ENCODE measurements at regions of chrX and their contacts with region 1.

Region 1: GRCh38 chrX:55135171-55135570 is 46.4 kb downstream of the PAGE2 start:
- DNase-seq: peak; percentile 43
- H3K4me3 ChIP-seq: no peak overlapping the region
- H3K27ac ChIP-seq: no peak overlapping the region
- H3K4me1 ChIP-seq: no peaks in the 10 kb centered on the region
- H3K27me3 ChIP-seq: no peaks in the 10 kb centered on the region
- CTCF ChIP-seq: peak; percentile 61

Region 2: DNA sequence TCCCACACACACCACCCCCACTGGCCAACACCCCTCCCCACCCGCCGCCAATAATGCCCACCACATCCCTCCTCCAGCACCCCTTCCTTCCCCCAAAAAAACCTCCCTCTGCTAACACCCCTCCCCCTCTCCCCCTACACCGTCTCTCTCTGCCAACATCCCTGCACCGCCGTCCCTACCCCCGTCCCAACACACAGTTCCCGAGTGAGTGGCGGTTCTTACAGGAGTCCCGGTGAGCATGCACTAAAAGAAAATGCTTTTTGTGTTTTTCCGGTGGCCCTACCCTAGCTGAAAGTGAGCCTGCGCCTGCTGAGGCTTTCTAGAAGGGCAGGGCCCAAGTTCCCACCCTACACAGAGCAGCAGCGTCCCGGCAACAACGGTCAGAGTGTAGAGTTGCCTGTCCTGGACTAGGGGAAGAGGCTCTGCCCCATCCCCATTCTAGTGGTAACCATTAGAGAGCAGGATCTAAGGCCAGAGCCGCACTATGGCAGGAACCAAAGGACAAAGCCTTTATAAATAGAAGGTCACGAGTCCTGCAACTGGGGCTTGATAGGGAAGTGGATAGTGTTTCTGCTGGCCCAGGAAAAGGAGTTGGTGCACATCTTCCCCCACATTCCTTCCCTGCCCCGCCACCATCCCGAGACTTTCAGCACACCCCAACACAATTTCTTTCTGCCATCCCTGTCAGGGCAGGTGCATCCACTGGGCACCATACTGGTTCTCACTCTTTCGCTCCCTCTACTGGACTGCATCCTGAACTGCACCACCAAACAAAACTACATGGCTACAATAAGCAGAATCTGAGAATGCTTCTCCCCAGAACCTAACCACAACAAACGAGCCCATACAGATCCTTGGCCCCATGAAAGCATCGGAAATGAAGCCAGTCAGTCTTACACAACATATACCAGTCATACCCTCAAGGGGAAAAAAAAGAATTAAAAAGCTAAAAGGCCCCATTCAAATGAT is 207.6 kb after region 1 on chrX:
- CTCF ChIA-PET with region 1: no interaction called
- POLR2A ChIA-PET with region 1: no interaction called
- intact Hi-C with region 1: loop called (anchors 5 kb)
- DNase-seq: peak; percentile 28
- H3K4me3 ChIP-seq: no peak overlapping the region
- H3K27ac ChIP-seq: no peak overlapping the region
- H3K4me1 ChIP-seq: no peaks in the 10 kb centered on the region
- H3K27me3 ChIP-seq: no peaks in the 10 kb centered on the region
- CTCF ChIP-seq: peak; percentile 64

Region 3: DNA sequence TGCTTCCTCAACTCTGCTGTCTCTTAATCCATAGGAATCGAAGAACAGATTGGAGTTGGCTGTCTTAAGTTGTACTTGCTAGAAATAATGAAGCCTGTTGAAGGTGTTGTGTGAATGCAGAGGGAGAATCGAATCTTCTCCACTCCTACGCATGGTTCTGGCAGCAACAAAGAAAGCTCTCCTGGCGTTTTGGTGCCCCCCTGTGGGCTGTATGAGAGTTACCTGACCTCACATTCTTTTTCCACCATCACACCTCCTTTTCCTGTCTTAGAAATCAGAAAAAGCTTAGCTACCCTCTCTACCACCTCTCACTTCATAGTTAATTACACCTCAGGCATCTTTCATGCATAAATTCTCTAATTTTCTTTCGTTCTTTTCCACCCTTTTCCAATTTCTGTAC is 1113.3 kb after region 1 on chrX:
- CTCF ChIA-PET with region 1: no interaction called
- POLR2A ChIA-PET with region 1: no interaction called
- intact Hi-C with region 1: loop called (anchors 10 kb)
- DNase-seq: peak; percentile 63
- H3K4me3 ChIP-seq: no peak overlapping the region
- H3K27ac ChIP-seq: no peak overlapping the region
- H3K4me1 ChIP-seq: no peaks in the 10 kb centered on the region
- H3K27me3 ChIP-seq: no peaks in the 10 kb centered on the region
- CTCF ChIP-seq: peak; percentile 72

Measured in A673 (cell line).